AG04449 (cell line): ENCODE measurements at regions of chr6 and their contacts with region 1.

Region 1: GRCh38 chr6:35240840-35241801 is 18.4 kb upstream of the ZNF76 start:
- DNase-seq: no peak
- H3K4me3 ChIP-seq: no peak overlapping the region
- CTCF ChIP-seq: peak; percentile 92

Region 2: GRCh38 chr6:34819571-34820480 is 421.3 kb before region 1 on chr6:
- CTCF ChIA-PET with region 1: no interaction called
- POLR2A ChIA-PET with region 1: no interaction called
- DNase-seq: no peak
- H3K4me3 ChIP-seq: no peak overlapping the region
- CTCF ChIP-seq: no peak

Region 3: DNA sequence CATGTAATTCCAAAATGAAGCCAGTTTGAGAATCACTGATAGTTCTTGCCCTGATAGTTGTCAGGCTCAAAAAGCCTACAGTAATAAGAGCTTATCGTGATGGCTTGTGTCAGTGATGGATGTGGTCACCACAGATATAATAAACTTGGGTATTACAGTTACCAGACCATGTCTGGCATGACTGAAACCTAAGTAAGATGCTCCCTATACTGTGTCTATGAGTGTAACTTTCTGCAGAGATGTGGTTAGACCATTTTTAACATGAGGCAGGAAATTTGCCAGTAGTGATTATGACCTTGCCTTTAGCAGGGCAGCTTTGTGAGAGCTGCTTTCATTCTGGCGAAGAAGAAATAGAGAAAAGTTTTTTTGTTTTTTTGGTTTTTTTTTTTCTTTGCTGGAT is 261.9 kb before region 1 on chr6:
- CTCF ChIA-PET with region 1: interaction called, 153 read pairs
- POLR2A ChIA-PET with region 1: no interaction called
- DNase-seq: no peak
- H3K4me3 ChIP-seq: no peak overlapping the region
- CTCF ChIP-seq: no peak

Region 4: GRCh38 chr6:35146453-35146852 is 94.7 kb before region 1 on chr6:
- CTCF ChIA-PET with region 1: interaction called, 340 read pairs
- POLR2A ChIA-PET with region 1: no interaction called
- DNase-seq: no peak
- H3K4me3 ChIP-seq: no peak overlapping the region
- CTCF ChIP-seq: peak; percentile 84

Region 5: DNA sequence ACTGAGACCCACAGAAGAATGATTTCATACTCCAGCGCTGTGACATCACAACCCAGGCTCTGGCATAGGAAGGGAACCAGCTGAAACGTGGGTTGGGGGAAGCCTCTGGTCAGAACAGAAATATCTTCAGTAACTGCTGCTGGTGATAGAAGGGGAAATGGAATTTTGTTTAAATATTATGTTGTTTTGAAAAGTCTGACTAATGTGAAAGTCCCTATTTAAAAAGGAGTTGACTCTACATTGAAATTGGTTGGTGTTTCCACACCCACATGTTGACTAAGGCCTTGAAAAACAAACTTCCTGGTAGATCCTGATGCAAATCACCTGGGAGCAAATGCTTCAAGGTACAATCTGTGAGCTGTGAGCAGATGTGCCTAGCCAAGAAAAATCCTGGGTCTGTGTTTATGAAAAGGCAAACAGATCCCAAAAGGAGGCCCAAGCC is 75.5 kb before region 1 on chr6:
- CTCF ChIA-PET with region 1: interaction called, 17 read pairs
- POLR2A ChIA-PET with region 1: no interaction called
- DNase-seq: no peak
- H3K4me3 ChIP-seq: no peak overlapping the region
- CTCF ChIP-seq: no peak

Region 6: GRCh38 chr6:35213824-35214756 is 27.0 kb before region 1 on chr6 and contains the start of gene SCUBE3:
- CTCF ChIA-PET with region 1: interaction called, 77 read pairs
- POLR2A ChIA-PET with region 1: interaction called, 3 read pairs
- DNase-seq: no peak
- H3K4me3 ChIP-seq: peak within 1 kb of the TSS; percentile 72
- CTCF ChIP-seq: no peak

Region 7: GRCh38 chr6:35230950-35231349 is 10.2 kb before region 1 on chr6:
- CTCF ChIA-PET with region 1: interaction called, 98 read pairs
- POLR2A ChIA-PET with region 1: no interaction called
- DNase-seq: no peak
- H3K4me3 ChIP-seq: no peak overlapping the region
- CTCF ChIP-seq: no peak